ENCODE measurements at regions of chr22 and their contacts with region 1.

Region 1: DNA sequence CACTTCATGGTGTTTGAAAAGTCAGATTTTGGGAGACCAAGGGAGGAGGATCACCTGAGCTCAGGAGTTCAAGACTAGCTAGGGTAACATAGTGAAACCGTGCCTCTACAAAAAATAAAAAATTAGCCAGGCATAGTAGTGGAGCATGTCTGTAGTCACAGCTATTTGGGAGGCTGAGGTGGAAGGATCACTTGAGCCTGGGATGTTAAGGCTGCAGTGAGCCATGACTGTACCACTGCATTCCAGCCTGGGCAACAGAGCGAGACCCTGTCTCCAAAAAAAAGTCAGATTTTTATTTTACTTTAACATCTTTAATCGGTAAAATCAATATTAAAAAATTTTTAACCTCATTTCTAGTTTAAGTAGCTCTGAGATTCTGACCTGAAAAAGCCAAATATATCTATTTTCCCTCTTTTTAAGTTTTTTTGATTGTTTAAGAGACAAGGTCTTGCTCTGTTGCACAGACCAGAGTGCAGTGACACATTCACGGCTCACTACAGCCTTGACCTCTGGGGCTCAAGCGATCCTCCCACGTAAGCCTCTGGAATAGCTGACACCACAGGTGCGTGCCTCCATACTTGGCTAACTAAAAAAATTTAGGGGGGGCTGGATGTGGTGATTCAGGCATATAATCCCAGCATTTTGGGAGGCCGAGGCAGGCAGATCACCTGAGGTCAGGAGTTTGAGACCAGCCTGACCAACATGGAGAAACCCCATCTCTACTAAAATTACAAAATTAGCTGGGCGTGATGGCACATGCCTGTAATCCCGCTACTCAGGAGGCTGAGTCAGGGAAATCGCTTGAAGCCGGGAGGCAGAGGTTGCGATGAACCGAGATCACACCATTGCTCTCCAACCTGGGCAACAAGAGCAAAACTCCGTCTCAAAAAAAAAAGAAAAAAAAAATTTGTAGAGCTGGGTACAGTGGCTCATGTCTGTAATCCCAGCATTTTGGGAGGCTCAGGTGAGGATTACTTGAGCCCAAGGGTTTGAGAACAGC is 48.4 kb downstream of the SFI1 start:
- DNase-seq: no peak
- CTCF ChIP-seq: no peak

Region 2: DNA sequence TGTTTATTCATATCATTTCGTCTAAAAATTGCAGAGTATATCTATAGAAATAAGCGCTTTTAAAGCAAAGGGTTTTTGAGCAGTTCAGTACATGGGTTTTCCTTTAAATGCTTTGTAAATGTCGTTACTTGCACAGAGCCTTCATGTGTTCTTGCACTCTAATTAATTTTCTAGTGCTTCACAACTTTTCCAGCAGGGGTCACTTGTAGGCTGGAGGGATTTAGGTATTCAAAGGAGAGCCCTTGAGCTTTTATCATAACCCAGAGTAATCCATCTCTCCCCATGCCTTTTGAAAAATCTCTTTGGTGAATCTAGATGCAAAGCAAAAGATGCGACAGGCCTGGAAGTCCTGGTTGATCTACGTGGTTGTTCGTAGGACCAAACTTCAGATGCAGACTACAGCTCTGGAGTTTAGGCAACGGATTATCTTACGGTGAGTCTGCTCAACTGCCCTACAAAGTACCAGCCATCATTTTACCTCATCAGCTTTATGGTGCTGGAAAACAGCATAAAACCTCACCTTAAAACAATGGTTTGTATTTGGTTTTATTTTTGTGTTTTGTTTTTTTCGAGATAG is 11.9 kb after region 1 on chr22:
- CTCF ChIA-PET with region 1: interaction called, 16 read pairs
- POLR2A ChIA-PET with region 1: no interaction called
- DNase-seq: no peak
- CTCF ChIP-seq: peak; percentile 23